MCF 10A (cell line): ENCODE measurements at regions of chr1 and their contacts with region 1.

Region 1: DNA sequence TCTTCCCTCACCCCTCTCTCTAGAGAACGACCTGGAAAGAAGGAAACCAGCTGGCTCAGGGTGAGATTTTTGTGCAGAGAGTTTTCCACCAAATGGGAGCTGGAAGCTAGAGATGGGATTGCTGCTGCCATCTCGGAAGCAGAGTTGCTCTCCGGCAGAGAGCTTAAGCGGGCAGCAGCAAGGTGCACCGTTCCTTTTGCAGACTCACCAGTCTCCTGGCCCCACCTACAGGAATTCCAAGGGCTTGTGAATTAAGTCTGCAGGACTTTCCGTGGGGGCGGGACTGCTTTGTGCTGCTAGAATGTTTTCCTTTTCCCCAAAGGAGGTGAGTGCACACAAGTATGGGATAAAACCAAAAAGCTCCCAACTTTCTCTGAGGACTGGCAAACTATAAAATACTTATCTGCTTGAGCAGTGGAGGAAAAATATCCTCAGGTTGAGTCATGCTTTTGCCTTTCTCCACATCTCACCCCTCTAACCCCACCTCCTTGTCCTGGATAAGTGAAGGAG is 29.1 kb upstream of the KIAA0040 start:
- DNase-seq: peak; percentile 91
- H3K4me3 Mint-ChIP-seq: no peak overlapping the region
- H3K27ac Mint-ChIP-seq: no peak overlapping the region
- H3K4me1 Mint-ChIP-seq: peaks cover 27% of the 10 kb centered on the region
- H3K27me3 Mint-ChIP-seq: no peaks in the 10 kb centered on the region
- CTCF ChIP-seq: peak; percentile 45

Region 2: GRCh38 chr1:174159252-174160108 is 1062.2 kb before region 1 on chr1 and contains the start of gene RABGAP1L:
- CTCF ChIA-PET with region 1: no interaction called
- POLR2A ChIA-PET with region 1: no interaction called
- intact Hi-C with region 1: no loop called
- DNase-seq: peak; percentile 96
- H3K4me3 Mint-ChIP-seq: peak within 1 kb of the TSS; percentile 97
- H3K27ac Mint-ChIP-seq: peak within 1 kb of the TSS; percentile 71
- H3K4me1 Mint-ChIP-seq: peaks cover 42% of the 10 kb centered on the region
- H3K27me3 Mint-ChIP-seq: no peaks in the 10 kb centered on the region
- CTCF ChIP-seq: no peak
- total RNA-seq, gene RABGAP1L: 18.2 and 19.0 TPM in 2 replicates

Region 3: DNA sequence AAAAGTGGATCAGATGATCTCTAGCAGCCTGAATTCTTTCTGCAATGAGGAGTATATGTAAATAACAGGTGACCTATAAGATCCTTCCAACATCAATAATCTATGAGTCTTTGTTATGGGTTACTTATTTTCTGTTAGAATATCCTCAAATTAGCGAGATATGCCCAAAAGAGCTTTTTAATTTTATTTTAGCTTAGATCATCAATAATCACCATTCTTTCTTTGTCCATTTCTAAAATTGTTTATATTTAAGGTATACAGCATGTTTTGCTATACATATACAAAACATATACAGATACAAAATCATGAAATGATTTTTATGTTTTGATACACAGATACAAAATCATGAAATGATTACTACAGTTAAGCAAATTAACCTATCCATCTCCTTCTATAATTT is 1050.6 kb before region 1 on chr1:
- CTCF ChIA-PET with region 1: no interaction called
- POLR2A ChIA-PET with region 1: no interaction called
- intact Hi-C with region 1: no loop called
- DNase-seq: no peak
- H3K4me3 Mint-ChIP-seq: no peak overlapping the region
- H3K27ac Mint-ChIP-seq: no peak overlapping the region
- H3K4me1 Mint-ChIP-seq: no peaks in the 10 kb centered on the region
- H3K27me3 Mint-ChIP-seq: no peaks in the 10 kb centered on the region
- CTCF ChIP-seq: no peak

Region 4: DNA sequence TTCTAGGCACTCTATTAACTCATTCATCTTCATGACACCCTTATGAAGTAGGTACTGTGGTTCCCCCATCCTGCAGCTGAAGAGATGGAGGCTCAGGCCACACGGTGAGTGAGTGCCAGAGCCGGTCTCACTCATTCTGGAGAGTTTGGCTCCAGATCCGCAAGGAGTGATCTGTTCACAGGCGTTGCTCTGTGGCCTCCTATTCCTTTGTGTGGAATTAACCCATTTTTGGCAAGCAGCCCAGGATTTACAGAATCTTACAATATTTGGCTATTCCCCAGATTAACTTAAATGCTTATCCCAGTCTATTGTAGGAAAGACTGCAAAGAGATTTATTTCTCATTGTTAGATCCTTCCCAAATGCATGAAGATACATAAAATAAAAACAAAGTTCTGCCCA is 58.8 kb before region 1 on chr1:
- CTCF ChIA-PET with region 1: interaction called, 306 read pairs
- POLR2A ChIA-PET with region 1: no interaction called
- intact Hi-C with region 1: no loop called
- DNase-seq: peak; percentile 40
- H3K4me3 Mint-ChIP-seq: no peak overlapping the region
- H3K27ac Mint-ChIP-seq: no peak overlapping the region
- H3K4me1 Mint-ChIP-seq: peaks cover 6% of the 10 kb centered on the region
- H3K27me3 Mint-ChIP-seq: no peaks in the 10 kb centered on the region
- CTCF ChIP-seq: no peak

Region 5: GRCh38 chr1:175179845-175180590 is 41.7 kb before region 1 on chr1:
- CTCF ChIA-PET with region 1: interaction called, 11 read pairs
- POLR2A ChIA-PET with region 1: interaction called, 3 read pairs
- intact Hi-C with region 1: no loop called
- DNase-seq: peak; percentile 25
- H3K4me3 Mint-ChIP-seq: no peak overlapping the region
- H3K27ac Mint-ChIP-seq: no peak overlapping the region
- H3K4me1 Mint-ChIP-seq: peaks cover 8% of the 10 kb centered on the region
- H3K27me3 Mint-ChIP-seq: no peaks in the 10 kb centered on the region
- CTCF ChIP-seq: no peak

Region 6: DNA sequence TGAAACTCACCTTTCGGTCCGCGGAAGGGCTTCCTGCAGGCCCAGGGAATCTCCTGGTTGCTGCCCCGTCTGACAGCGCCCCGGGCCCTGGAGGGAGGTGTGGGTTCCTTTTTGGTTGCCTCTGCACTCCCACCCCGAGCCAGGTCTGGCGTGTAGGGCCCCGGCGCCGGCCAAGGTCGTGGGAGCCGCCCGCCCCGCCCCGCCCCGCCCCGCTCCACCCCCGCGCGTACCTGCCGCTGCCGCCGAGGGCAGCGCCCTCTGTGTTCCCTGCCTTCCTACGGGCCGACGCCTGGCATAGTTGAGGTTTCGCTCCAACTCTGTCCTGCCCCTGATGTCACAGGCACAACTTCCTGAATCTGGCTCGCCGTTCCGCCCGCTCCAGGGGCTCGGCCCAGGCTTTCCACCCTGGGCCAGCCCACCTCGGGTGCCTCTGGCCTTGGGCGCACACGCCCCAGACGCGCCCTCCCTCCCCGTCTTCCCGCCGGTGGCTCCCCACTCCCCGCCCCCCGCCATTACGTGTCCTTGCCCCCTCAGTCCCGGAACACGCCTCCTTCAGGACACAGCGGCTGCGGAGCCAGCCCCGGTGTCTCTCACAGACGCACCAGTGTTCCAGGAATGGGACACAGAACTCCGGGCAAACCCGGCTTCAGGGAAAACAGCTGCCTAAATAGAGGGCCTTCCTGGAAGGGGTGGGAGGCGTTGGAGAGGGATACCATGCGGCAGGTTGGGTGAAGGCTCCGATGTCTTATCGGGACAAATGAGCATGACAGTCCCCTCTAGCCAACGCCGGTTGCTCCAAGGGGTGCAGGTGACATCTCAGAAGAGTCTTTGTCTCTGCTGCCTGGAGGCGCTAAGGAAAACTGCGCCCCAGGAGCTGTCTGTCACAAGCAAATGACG is 28.8 kb before region 1 on chr1 and contains the start of gene KIAA0040:
- CTCF ChIA-PET with region 1: interaction called, 31 read pairs
- POLR2A ChIA-PET with region 1: interaction called, 22 read pairs
- intact Hi-C with region 1: loop called (anchors 2 kb)
- DNase-seq: peak; percentile 87
- H3K4me3 Mint-ChIP-seq: peak within 1 kb of the TSS; percentile 80
- H3K27ac Mint-ChIP-seq: peak within 1 kb of the TSS; percentile 67
- H3K4me1 Mint-ChIP-seq: peaks cover 43% of the 10 kb centered on the region
- H3K27me3 Mint-ChIP-seq: no peaks in the 10 kb centered on the region
- CTCF ChIP-seq: no peak
- total RNA-seq, gene KIAA0040: 26.7 and 27.7 TPM in 2 replicates

Region 7: DNA sequence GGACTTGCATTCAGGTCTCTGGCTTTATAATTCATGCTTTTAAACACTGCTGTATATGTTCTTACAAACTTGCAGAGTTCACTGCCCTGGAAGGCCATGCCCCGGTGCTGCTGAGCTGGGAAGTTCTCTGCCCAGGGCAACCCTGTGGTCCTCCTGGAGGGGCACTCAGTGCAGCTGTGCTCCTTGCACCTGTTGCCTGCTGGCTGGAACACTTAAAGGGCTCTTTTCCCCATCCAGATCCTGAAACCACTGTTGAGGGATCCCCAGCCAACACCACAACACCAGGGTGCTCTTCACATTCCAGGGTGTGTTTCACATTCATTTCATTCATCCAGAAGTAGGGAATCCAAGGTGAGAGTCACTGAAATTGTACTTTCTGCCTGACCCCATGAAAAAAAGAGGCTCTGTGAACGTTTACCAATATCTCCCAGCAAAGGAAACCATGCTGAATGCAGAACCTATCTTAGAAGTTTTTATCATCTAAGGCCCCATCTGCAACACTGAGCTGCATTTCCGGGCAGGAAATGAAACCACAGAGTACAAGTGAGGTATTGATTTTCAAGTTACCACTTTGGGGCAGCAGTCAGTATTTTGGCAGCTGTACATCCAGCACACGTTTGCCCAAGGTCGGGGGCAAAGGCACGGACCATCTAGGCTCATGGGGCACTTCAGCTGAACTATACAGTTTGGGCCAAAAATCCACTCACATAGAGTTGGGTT is 12.8 kb before region 1 on chr1:
- CTCF ChIA-PET with region 1: interaction called, 43 read pairs
- POLR2A ChIA-PET with region 1: interaction called, 8 read pairs
- intact Hi-C with region 1: no loop called
- DNase-seq: no peak
- H3K4me3 Mint-ChIP-seq: no peak overlapping the region
- H3K27ac Mint-ChIP-seq: no peak overlapping the region
- H3K4me1 Mint-ChIP-seq: peaks cover 14% of the 10 kb centered on the region
- H3K27me3 Mint-ChIP-seq: no peaks in the 10 kb centered on the region
- CTCF ChIP-seq: no peak